ENCODE measurements at regions of chr9 and their contacts with region 1.

Region 1: GRCh38 chr9:129177791-129178559 is at the start of gene IER5L:
- DNase-seq: peak; percentile 89 to 98
- H3K4me3 ChIP-seq: peak within 1 kb of the TSS; percentile 81 to 100
- H3K27ac ChIP-seq: peak within 1 kb of the TSS; percentile 97 to 100
- H3K4me1 ChIP-seq: peaks cover 9 to 21% of the 10 kb centered on the region in 2 donors
- H3K27me3 ChIP-seq: no peaks in the 10 kb centered on the region
- CTCF ChIP-seq: no peak
- total RNA-seq, gene IER5L: 86.1 TPM

Region 2: DNA sequence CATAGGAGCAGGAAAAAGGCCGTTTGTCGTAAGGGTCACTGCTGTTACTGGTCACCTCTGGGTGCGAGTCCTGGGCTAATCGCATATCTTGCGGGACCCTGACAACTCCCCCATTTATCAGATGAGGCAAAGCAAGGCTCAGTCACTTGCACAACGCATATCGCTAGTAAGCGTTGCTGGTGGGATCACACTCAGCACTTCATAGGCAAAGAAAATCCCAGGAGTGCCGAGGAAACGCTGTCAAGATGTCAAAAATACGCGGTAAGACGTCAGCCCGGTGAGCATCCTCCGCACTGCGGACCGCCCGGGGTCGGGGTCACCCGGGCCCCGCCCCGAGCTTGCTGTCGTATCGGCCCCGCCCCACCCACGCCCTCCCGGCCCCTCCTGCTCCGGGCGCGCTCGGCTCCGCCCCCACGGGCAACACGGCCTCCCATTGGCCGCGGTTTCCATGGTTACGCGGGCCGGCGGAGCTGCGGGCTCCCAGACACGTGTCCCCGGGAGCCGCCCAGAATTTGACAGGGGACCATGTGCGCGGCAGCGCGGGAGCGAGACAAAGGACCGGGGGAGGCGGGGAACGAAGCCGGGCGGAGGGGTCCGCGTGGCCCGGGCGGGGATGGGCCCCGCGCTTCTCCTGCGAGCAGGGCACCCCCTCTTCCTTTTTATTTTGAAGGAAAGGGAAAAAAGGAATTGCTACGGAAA is 80.3 kb after region 1 on chr9:
- intact Hi-C with region 1: loop called (anchors 2 kb)
- DNase-seq: peak; percentile 71 to 93
- H3K4me3 ChIP-seq: peak overlapping the region; percentile 20 to 53
- H3K27ac ChIP-seq: peak overlapping the region in 1 of 2 donors; percentile 20
- H3K4me1 ChIP-seq: peaks cover 14 to 18% of the 10 kb centered on the region in 2 donors
- H3K27me3 ChIP-seq: no peaks in the 10 kb centered on the region
- CTCF ChIP-seq: no peak

Region 3: GRCh38 chr9:129383561-129384416 is 205.8 kb after region 1 on chr9:
- intact Hi-C with region 1: loop called (anchors 1 kb)
- DNase-seq: peak; percentile 41 to 86
- H3K4me3 ChIP-seq: peak overlapping the region; percentile 70 to 76
- H3K27ac ChIP-seq: peak overlapping the region; percentile 93 to 95
- H3K4me1 ChIP-seq: peaks cover 4 to 17% of the 10 kb centered on the region in 2 donors
- H3K27me3 ChIP-seq: no peaks in the 10 kb centered on the region
- CTCF ChIP-seq: peak in 2 of 3 experiments; percentile 16 to 33

Region 4: GRCh38 chr9:129482521-129483414 is 304.8 kb after region 1 on chr9:
- intact Hi-C with region 1: loop called (anchors 1 kb)
- DNase-seq: peak in 1 of 2 donors; percentile 93
- H3K4me3 ChIP-seq: peak overlapping the region; percentile 54 to 63
- H3K27ac ChIP-seq: peak overlapping the region; percentile 98 to 100
- H3K4me1 ChIP-seq: peaks cover 32 to 64% of the 10 kb centered on the region in 2 donors
- H3K27me3 ChIP-seq: no peaks in the 10 kb centered on the region
- CTCF ChIP-seq: peak in 1 of 3 experiments; percentile 19

Region 5: GRCh38 chr9:129610473-129611301 is 432.7 kb after region 1 on chr9:
- intact Hi-C with region 1: loop called (anchors 1 kb)
- DNase-seq: peak in 1 of 2 donors; percentile 90
- H3K4me3 ChIP-seq: peak overlapping the region; percentile 63 to 84
- H3K27ac ChIP-seq: peak overlapping the region; percentile 91 to 92
- H3K4me1 ChIP-seq: peaks cover 5 to 46% of the 10 kb centered on the region in 2 donors
- H3K27me3 ChIP-seq: no peaks in the 10 kb centered on the region
- CTCF ChIP-seq: peak; percentile 74 to 100 (median 81)